Caco-2 (cell line): ENCODE measurements at regions of chr12 and their contacts with region 1.

Region 1: DNA sequence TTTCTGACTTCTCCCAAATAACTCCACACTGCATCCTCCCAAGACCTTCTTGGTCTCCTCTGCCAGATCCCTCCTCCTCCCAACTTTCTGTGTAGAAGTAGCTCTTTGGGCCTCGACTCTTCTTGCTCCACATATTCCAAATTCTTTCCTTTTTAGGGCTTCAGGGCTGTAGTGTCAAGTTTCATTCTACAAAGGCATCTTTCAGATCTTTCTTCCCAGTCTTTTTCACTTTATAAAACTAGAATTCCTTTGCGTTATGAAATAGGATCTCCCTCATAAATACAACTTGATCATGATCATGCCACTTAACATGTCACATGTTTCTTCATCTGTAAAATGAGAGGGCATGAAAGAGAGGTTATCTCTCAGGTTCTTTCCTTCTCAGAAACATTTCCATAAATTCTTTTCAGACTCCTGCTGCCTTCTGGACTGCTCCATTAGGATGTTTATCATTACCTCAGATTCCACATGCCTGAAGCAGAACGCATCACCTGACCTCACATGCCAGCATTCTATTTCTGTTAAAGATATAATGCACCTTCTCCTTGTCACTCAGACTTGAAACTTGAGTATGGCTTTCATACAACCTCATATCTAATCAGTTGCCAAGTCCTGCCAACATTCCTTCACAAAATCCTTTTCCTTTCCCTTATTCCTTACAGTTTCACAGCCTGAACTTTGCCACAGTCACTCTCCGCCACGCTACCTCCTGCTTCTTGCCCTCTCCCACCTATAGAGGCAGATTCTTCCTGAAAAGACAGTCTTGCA is 8.5 kb downstream of the SLC38A1 start:
- DNase-seq: peak; percentile 62 to 71
- H3K4me3 ChIP-seq: no peak overlapping the region
- H3K4me3 Mint-ChIP-seq: no peak overlapping the region
- H3K27ac Mint-ChIP-seq: no peak overlapping the region
- H3K4me1 ChIP-seq: peaks cover 95% of the 10 kb centered on the region
- H3K4me1 Mint-ChIP-seq: peaks cover 15% of the 10 kb centered on the region
- H3K27me3 ChIP-seq: no peaks in the 10 kb centered on the region
- H3K27me3 Mint-ChIP-seq: no peaks in the 10 kb centered on the region
- CTCF ChIP-seq: no peak

Region 2: GRCh38 chr12:45973526-45973925 is 286.8 kb before region 1 on chr12:
- CTCF ChIA-PET with region 1: no interaction called
- POLR2A ChIA-PET with region 1: no interaction called
- intact Hi-C with region 1: loop called (anchors 5 kb)
- DNase-seq: peak in 1 of 2 experiments; percentile 36
- H3K4me3 ChIP-seq: no peak overlapping the region
- H3K4me3 Mint-ChIP-seq: peak overlapping the region; percentile 62
- H3K27ac Mint-ChIP-seq: peak overlapping the region; percentile 51
- H3K4me1 ChIP-seq: peaks cover 88% of the 10 kb centered on the region
- H3K4me1 Mint-ChIP-seq: peaks cover 71% of the 10 kb centered on the region
- H3K27me3 ChIP-seq: no peaks in the 10 kb centered on the region
- H3K27me3 Mint-ChIP-seq: no peaks in the 10 kb centered on the region
- CTCF ChIP-seq: no peak

Region 3: DNA sequence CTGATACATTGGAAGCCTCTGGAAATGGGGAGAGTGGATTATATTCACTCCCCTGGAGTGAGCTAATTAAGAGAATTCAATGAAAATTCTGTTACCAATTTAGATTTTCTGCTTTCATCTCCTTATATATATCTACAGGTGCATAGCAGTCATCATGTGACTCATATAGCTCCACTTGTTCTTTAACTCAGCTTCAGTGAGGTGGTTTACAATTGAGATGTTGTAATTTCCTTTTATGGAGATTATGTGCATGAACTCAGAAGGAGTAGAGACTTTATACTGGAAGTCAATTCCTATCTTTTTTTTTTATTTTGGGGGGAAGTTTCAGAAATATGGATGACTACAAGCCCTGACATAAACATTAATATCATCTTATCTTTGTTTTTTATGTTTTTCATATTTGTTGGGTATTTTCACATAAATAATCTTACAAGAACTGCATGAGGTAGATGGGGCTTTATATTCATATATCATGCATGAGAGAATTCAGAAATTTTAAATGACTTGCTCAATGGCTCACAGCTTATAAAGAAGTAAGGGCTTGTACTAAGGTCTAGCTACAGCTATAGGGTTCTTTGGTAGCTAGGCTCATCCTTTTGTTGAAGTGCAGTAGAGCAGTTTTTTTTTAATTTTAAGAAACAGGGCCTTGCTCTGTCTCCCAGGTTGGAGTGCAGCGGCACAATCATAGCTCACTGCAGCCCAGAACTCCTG is 177.7 kb before region 1 on chr12:
- CTCF ChIA-PET with region 1: no interaction called
- POLR2A ChIA-PET with region 1: no interaction called
- intact Hi-C with region 1: no loop called
- DNase-seq: no peak
- H3K4me3 ChIP-seq: no peak overlapping the region
- H3K4me3 Mint-ChIP-seq: no peak overlapping the region
- H3K27ac Mint-ChIP-seq: no peak overlapping the region
- H3K4me1 ChIP-seq: no peaks in the 10 kb centered on the region
- H3K4me1 Mint-ChIP-seq: no peaks in the 10 kb centered on the region
- H3K27me3 ChIP-seq: no peaks in the 10 kb centered on the region
- H3K27me3 Mint-ChIP-seq: no peaks in the 10 kb centered on the region
- CTCF ChIP-seq: no peak

Region 4: GRCh38 chr12:46585854-46586621 is 325.7 kb after region 1 on chr12:
- CTCF ChIA-PET with region 1: no interaction called
- POLR2A ChIA-PET with region 1: no interaction called
- intact Hi-C with region 1: loop called (anchors 5 kb)
- DNase-seq: peak; percentile 73 to 84
- H3K4me3 ChIP-seq: no peak overlapping the region
- H3K4me3 Mint-ChIP-seq: no peak overlapping the region
- H3K27ac Mint-ChIP-seq: no peak overlapping the region
- H3K4me1 ChIP-seq: peaks cover 13% of the 10 kb centered on the region
- H3K4me1 Mint-ChIP-seq: peaks cover 14% of the 10 kb centered on the region
- H3K27me3 ChIP-seq: no peaks in the 10 kb centered on the region
- H3K27me3 Mint-ChIP-seq: no peaks in the 10 kb centered on the region
- CTCF ChIP-seq: no peak